ENCODE measurements at regions of chr4 and their contacts with region 1.

Region 1: DNA sequence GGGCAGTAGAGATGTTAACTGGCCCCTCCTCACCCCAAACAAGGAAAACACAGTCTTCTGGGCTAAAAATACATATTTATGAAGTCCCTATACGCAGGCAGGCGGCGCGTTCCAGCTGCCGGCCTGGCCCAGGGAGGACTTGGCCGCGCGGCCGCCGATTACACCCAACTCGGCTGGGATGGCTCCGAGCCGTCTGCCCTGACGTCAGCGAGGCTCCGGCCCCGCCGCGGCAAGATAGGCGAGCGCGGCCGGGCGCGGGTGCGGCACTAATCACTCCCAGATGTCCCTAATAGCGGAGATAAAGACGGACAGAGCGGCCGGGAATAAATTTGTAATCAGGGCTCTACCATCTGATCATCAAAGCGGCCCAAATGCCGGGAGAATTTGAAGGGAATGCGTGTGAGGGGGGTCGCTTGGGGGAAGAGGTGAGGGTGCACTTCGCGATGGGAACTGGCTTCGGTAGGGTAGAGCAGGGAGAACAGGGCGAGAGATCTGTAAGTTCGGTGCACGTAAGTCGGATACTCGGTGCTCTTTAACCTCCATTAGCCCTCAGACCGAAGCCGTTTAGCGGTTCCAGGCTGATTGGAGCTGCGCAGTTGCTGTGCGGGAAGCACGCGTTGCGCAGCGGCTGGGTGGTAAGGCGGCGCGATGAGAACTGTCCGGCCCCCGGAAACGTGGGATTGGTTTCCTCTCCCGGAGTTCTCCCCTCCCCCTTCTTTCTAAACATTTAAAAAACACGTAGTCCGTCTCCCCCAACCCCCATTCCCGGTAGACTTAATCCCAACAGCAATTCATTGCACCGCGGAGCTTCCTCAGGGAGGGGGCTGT is 7.7 kb downstream of the HAND2 start:
- DNase-seq: peak; percentile 97
- H3K4me3 ChIP-seq: peak overlapping the region; percentile 90 to 96 (median 92)
- H3K27ac ChIP-seq: peak overlapping the region; percentile 98 to 99 (median 99)
- H3K4me1 ChIP-seq: peaks cover 0 to 36% (median 30%) of the 10 kb centered on the region in 4 donors
- H3K27me3 ChIP-seq: no peaks in the 10 kb centered on the region
- CTCF ChIP-seq: no peak
- EP300 ChIP-seq: peak; percentile 1 to 57 (median 33)
- POLR2A ChIP-seq: peak; percentile 37 to 61

Region 2: GRCh38 chr4:174214101-174214878 is 692.0 kb after region 1 on chr4:
- intact Hi-C with region 1: loop called (anchors 5 kb)
- DNase-seq: no peak
- H3K4me3 ChIP-seq: peak overlapping the region; percentile 29 to 54 (median 45)
- H3K27ac ChIP-seq: peak overlapping the region in 3 of 4 donors; percentile 70 to 85 (median 77)
- H3K4me1 ChIP-seq: peaks cover 0 to 39% (median 33%) of the 10 kb centered on the region in 4 donors
- H3K27me3 ChIP-seq: peaks cover 0 to 7% (median 0%) of the 10 kb centered on the region in 3 donors
- CTCF ChIP-seq: no peak
- EP300 ChIP-seq: no peak
- POLR2A ChIP-seq: peak in 1 of 2 donors; percentile 15